MCF 10A (cell line): ENCODE measurements at regions of chr14 and their contacts with region 1.

Region 1: GRCh38 chr14:78863143-78863542 is 693.0 kb downstream of the NRXN3 start:
- DNase-seq: peak; percentile 65
- H3K4me3 Mint-ChIP-seq: no peak overlapping the region
- H3K27ac Mint-ChIP-seq: no peak overlapping the region
- H3K4me1 Mint-ChIP-seq: no peaks in the 10 kb centered on the region
- H3K27me3 Mint-ChIP-seq: peaks cover 22% of the 10 kb centered on the region
- CTCF ChIP-seq: no peak

Region 2: GRCh38 chr14:78848234-78848820 is 14.8 kb before region 1 on chr14:
- CTCF ChIA-PET with region 1: interaction called, 20 read pairs
- POLR2A ChIA-PET with region 1: no interaction called
- intact Hi-C with region 1: no loop called
- DNase-seq: peak; percentile 71
- H3K4me3 Mint-ChIP-seq: no peak overlapping the region
- H3K27ac Mint-ChIP-seq: no peak overlapping the region
- H3K4me1 Mint-ChIP-seq: no peaks in the 10 kb centered on the region
- H3K27me3 Mint-ChIP-seq: peaks cover 49% of the 10 kb centered on the region
- CTCF ChIP-seq: peak; percentile 98

Region 3: GRCh38 chr14:78927261-78927660 is 64.1 kb after region 1 on chr14:
- CTCF ChIA-PET with region 1: no interaction called
- POLR2A ChIA-PET with region 1: no interaction called
- intact Hi-C with region 1: no loop called
- DNase-seq: no peak
- H3K4me3 Mint-ChIP-seq: no peak overlapping the region
- H3K27ac Mint-ChIP-seq: no peak overlapping the region
- H3K4me1 Mint-ChIP-seq: no peaks in the 10 kb centered on the region
- H3K27me3 Mint-ChIP-seq: no peaks in the 10 kb centered on the region
- CTCF ChIP-seq: no peak

Region 4: DNA sequence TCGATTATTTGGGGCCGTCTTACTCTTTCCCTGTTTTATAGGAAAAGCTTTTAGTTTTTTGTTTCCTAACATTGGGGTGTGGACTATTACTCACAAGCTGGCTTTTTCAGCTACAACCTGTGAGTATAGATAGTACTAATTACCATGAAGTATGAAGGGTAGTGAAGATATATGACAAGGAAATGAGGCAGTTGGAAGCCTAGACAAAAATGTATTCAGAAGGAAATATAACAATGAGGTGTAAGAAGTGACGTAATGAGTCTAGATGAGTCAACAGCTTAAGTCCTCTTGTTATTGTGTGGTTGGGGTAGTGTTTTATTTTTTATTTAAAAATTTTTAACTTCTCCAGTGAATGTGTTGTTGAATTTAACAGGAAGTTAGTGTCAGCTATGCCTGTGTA is 111.5 kb after region 1 on chr14:
- CTCF ChIA-PET with region 1: no interaction called
- POLR2A ChIA-PET with region 1: no interaction called
- intact Hi-C with region 1: no loop called
- DNase-seq: peak; percentile 8
- H3K4me3 Mint-ChIP-seq: no peak overlapping the region
- H3K27ac Mint-ChIP-seq: no peak overlapping the region
- H3K4me1 Mint-ChIP-seq: no peaks in the 10 kb centered on the region
- H3K27me3 Mint-ChIP-seq: no peaks in the 10 kb centered on the region
- CTCF ChIP-seq: no peak